A549 (cell line): ENCODE measurements at regions of chr2 and their contacts with region 1.

Region 1: DNA sequence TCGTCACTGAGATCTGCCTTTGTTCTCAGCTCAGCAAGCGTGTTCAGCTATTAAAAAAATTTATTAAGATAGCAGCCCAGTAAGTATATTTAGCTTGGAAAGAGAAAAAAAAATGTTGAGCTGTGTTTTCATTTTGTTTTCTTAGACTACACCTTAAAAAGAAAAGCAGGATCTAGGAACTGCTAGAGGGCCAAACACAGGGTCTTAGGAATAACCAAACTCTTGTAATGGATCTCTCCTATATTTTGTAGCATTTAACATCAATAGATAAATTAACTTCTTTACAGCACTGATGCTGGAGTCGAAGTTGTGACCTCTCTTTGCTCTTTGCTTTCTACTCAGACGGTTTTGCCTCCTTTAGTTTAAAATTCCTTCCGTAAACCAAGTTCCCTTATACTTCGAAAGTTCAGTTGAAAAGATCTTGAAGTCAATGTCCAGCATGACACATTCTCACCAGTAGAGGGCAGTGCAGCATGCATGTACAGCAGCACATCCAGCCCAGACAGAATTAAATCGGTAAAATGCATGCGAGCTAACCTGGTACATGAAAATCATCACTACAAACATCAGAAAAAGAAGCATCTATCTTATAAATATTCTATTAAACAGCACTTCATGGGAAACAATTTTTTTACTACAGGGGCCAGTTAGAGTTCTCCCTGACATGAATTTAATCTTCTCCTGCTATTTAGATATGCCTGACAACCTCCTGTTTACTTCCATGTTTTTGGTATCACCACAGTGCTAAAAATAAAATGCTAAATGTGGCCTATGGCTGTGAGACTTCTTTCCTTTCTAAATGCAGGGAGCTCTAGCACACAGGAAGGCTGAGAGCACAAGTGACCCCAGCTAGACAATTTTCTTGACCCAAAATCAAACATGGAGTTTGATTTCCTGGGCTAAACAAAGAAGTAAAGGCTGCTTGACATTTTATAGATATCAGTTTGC is 48.2 kb upstream of the MAP3K20 start:
- DNase-seq: peak; percentile 46 to 92
- ATAC-seq: peak; percentile 84 to 90
- H3K4me3 ChIP-seq: no peak overlapping the region
- H3K27ac ChIP-seq: peak overlapping the region; percentile 48 to 72
- H3K4me1 ChIP-seq: peaks cover 6% of the 10 kb centered on the region; the same call in 2 of the 3 replicates
- CTCF ChIP-seq: peak; percentile 97
- EP300 ChIP-seq: no peak
- POLR2A ChIP-seq: no peak
- RAD21 ChIP-seq: peak; percentile 99

Region 2: DNA sequence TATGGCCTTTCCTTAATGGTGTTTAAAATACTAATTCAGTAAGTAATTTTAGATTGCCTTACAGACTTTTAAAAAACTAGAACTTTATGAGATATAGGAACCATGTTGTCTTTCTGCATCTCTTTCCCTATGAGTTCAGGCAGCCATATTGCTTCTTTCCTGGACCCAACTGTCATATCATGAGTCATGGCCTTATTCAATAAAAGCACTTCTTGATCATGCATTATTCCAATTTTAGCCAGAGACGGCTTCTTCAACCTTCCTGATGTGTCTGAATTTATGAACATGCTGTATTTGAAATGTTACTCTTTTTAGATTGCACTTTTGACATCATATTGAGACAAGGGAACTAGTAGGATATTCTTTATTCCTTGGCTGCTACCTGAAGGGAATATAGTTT is 17.2 kb before region 1 on chr2:
- CTCF ChIA-PET with region 1: interaction called, 14 read pairs
- POLR2A ChIA-PET with region 1: no interaction called
- DNase-seq: no peak
- ATAC-seq: no peak
- H3K4me3 ChIP-seq: no peak overlapping the region
- H3K27ac ChIP-seq: no peak overlapping the region
- H3K4me1 ChIP-seq: no peaks in the 10 kb centered on the region; the same call in 2 of the 3 replicates
- CTCF ChIP-seq: no peak
- EP300 ChIP-seq: no peak
- POLR2A ChIP-seq: no peak
- RAD21 ChIP-seq: no peak

Region 3: GRCh38 chr2:173048897-173049661 is 21.6 kb after region 1 on chr2:
- CTCF ChIA-PET with region 1: interaction called, 19 read pairs
- POLR2A ChIA-PET with region 1: no interaction called
- DNase-seq: peak; percentile 71 to 97
- ATAC-seq: peak; percentile 94 to 98
- H3K4me3 ChIP-seq: peak overlapping the region; percentile 26; the same call in 1 of the 3 replicates
- H3K27ac ChIP-seq: peak overlapping the region; percentile 83 to 90
- H3K4me1 ChIP-seq: peaks cover 54% of the 10 kb centered on the region
- CTCF ChIP-seq: no peak
- EP300 ChIP-seq: peak; percentile 80 to 82; a peak in 4 of 5 replicates
- POLR2A ChIP-seq: no peak
- RAD21 ChIP-seq: no peak; a peak in 2 of 5 replicates

Region 4: DNA sequence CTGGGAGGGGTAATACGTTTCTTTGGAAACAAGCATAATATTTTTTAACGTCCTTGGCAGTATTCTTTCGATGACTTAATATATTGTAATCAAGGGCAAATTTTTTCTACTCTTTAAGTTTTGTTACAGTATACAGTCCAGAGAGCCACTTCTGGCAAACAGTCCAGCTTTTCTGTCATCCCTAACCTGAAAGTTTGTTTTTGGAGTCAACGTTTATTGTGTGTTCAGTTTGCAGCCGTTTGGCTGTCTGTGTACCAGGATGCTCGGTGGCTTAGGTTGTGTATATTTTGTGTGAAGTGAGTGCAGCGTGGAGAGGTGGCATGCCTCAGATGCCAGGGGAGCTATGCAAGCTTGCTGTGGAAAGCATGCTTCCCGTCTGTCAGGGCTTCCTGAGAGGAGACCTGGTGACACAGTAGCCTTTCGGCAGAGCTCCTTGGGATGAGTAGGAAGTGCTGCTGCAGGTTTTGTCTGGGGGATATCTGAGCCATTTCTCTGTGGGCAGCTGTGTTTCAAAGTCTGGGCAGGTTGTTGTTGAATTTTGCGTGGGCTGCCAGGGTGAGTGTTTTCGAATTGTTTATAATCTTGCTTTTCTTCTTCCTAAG is 62.9 kb after region 1 on chr2:
- CTCF ChIA-PET with region 1: interaction called, 26 read pairs
- POLR2A ChIA-PET with region 1: no interaction called
- DNase-seq: peak in 1 of 2 experiments; percentile 52
- ATAC-seq: peak; percentile 64 to 73
- H3K4me3 ChIP-seq: no peak overlapping the region
- H3K27ac ChIP-seq: peak overlapping the region; percentile 44 to 56
- H3K4me1 ChIP-seq: peaks cover 75% of the 10 kb centered on the region
- CTCF ChIP-seq: no peak
- EP300 ChIP-seq: no peak
- POLR2A ChIP-seq: no peak
- RAD21 ChIP-seq: no peak

Region 5: DNA sequence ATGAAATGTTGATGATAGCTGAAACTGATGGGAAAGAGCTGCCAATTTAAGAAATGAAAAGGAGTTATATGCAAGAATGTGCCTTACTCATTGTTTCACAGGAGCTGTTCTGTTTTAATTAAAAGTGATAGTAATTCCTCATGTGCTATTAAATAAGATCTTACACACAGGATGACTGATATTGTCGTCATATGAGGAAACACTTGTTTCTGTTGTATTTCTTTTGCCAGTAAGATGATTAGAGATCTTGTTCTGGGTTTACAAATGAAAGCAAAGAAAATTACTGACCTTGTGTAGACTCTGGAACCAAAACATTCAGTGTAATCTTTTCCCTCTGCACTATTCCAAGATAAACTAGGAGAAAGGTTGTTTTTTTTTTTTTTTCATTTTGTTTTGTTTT is 171.8 kb after region 1 on chr2:
- CTCF ChIA-PET with region 1: interaction called, 14 read pairs
- POLR2A ChIA-PET with region 1: no interaction called
- DNase-seq: no peak
- ATAC-seq: no peak
- H3K4me3 ChIP-seq: no peak overlapping the region
- H3K27ac ChIP-seq: no peak overlapping the region
- H3K4me1 ChIP-seq: peaks cover 11% of the 10 kb centered on the region; the same call in 2 of the 3 replicates
- CTCF ChIP-seq: no peak
- EP300 ChIP-seq: no peak
- POLR2A ChIP-seq: no peak
- RAD21 ChIP-seq: no peak

Region 6: GRCh38 chr2:173402405-173402974 is 375.0 kb after region 1 on chr2:
- CTCF ChIA-PET with region 1: interaction called, 11 read pairs
- POLR2A ChIA-PET with region 1: no interaction called
- DNase-seq: peak; percentile 81 to 86
- ATAC-seq: peak; percentile 95 to 98
- H3K4me3 ChIP-seq: peak overlapping the region; percentile 43
- H3K27ac ChIP-seq: peak overlapping the region; percentile 70 to 80
- H3K4me1 ChIP-seq: peaks cover 17% of the 10 kb centered on the region; the same call in 2 of the 3 replicates
- CTCF ChIP-seq: peak; percentile 94
- EP300 ChIP-seq: no peak
- POLR2A ChIP-seq: no peak
- RAD21 ChIP-seq: peak; percentile 99